K562 (cell line): ENCODE measurements at regions of chr6 and their contacts with region 1.

Region 1: GRCh38 chr6:101181006-101181405 is 212.5 kb upstream of the GRIK2 start:
- DNase-seq: no peak
- ATAC-seq: no peak
- H3K4me3 ChIP-seq: no peak overlapping the region
- H3K27ac ChIP-seq: no peak overlapping the region
- H3K4me1 ChIP-seq: no peaks in the 10 kb centered on the region
- H3K27me3 ChIP-seq: no peaks in the 10 kb centered on the region
- CTCF ChIP-seq: no peak
- EP300 ChIP-seq: no peak
- POLR2A ChIP-seq: no peak
- RAD21 ChIP-seq: no peak

Region 2: GRCh38 chr6:101909366-101909765 is 728.4 kb after region 1 on chr6:
- CTCF ChIA-PET with region 1: no interaction called
- POLR2A ChIA-PET with region 1: no interaction called
- in situ Hi-C with region 1: no loop called
- intact Hi-C with region 1: loop called (anchors 10 kb)
- DNase-seq: no peak
- ATAC-seq: no peak
- H3K4me3 ChIP-seq: no peak overlapping the region
- H3K27ac ChIP-seq: no peak overlapping the region
- H3K4me1 ChIP-seq: no peaks in the 10 kb centered on the region
- H3K27me3 ChIP-seq: no peaks in the 10 kb centered on the region
- CTCF ChIP-seq: no peak
- EP300 ChIP-seq: no peak
- POLR2A ChIP-seq: no peak
- RAD21 ChIP-seq: no peak